Sciatic nerve (tissue), 2 donors: ENCODE measurements at regions of chr11 and their contacts with region 1.

Region 1: GRCh38 chr11:6505577-6506240 is 8.6 kb downstream of the DNHD1 start:
- DNase-seq: no peak
- ATAC-seq: peak; percentile 82

Region 2: GRCh38 chr11:4957396-4957795 is 1548.3 kb before region 1 on chr11:
- intact Hi-C with region 1: loop called (anchors 5 kb)
- DNase-seq: no peak
- ATAC-seq: no peak